Activated naive CD8-positive, alpha-beta T cell treated with anti-CD3 and anti-CD28 coated beads, Interleukin-2, amount 10 ng/mL, durations not matched to agents 7 days and 5 days (primary cell): ENCODE measurements at regions of chr15 and their contacts with region 1.

Region 1: GRCh38 chr15:43824302-43825246 is at the start of gene MFAP1:
- DNase-seq: peak; percentile 78
- ATAC-seq: peak; percentile 85
- H3K4me3 Mint-ChIP-seq: peak within 1 kb of the TSS; percentile 100
- H3K27ac Mint-ChIP-seq: peak within 1 kb of the TSS; percentile 99
- H3K4me1 Mint-ChIP-seq: peaks cover 26% of the 10 kb centered on the region
- H3K27me3 Mint-ChIP-seq: no peaks in the 10 kb centered on the region
- total RNA-seq, gene MFAP1: 33.6 to 35.3 TPM

Region 2: DNA sequence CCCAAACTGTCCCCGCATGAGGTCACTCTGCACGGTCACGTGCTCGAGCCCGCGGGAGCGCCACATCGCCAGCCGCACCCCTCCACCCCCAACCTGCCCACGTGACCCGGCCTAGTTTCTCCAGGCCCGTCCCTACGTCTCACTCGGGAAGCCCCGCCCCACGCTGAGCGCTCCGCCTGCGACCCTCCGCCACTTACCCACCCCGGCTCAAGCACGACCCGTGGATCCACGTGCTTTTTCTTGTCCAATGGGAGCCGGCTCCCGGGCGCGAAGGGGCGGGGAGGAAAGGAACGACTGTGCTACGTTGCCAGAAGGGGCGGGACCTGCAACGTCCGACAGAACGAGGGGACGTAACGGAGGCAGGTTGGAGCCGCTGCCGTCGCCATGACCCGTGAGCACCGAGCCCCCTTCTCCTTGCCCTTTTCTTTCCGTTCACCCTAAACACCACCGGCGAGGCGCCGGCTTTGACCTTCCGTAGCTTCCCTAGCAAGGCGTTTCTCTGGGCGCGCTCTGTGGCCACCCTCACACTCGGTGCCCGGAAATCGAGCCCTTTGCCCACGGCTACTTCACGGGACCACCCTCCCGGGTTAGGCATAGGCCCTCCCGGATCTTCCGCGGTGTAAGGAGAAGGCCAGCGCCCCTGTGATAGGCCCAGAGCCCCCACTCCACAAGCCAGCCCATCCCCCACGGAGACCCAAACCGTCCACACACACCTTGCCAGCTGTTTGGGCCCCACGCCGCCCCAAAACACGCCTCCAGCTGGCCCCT is 32.4 kb before region 1 on chr15 and contains the start of gene SERF2:
- POLR2A ChIA-PET with region 1: interaction called, 22 read pairs
- DNase-seq: peak; percentile 98
- ATAC-seq: peak; percentile 96
- H3K4me3 Mint-ChIP-seq: peak within 1 kb of the TSS; percentile 90
- H3K27ac Mint-ChIP-seq: peak within 1 kb of the TSS; percentile 94
- H3K4me1 Mint-ChIP-seq: peaks cover 37% of the 10 kb centered on the region
- H3K27me3 Mint-ChIP-seq: no peaks in the 10 kb centered on the region
- total RNA-seq, gene SERF2: 926 to 987 TPM

Region 3: DNA sequence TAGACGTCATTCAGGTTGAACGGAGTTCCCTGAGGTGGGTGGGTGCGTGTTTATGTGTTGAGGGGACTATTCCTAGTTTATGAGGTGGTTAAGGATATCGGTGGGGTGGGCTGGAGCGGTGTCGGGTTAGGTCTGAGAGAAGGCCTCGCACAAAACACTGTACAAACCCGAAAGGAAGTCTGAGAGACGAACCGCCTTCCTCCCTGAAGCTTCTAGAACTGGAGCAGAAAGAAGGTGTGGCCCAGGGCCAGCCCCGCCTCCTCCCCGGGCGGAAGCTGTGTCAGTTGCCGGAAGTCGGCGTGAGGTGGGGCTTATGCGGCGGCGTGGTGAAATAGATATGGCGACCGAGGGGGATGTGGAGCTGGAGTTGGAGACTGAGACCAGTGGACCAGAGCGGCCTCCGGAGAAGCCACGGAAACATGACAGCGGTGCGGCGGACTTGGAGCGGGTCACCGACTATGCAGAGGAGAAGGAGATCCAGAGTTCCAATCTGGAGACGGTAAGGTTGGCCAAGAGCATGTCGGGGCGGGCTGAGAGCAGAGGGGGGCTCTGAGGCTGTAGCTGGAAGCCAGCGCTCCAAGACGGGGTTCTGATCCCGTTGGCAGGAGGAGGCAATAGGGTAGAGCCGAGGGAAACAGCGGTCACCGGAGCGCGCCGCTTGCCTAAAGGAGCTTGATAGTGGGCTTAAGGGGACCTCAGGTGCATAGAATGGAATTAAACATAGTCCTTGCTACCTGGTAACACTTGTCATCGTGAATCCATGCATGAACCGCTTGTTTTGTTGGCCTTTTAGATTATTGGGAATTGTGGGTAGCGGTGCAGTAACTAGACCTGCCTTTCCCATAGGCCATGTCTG is 24.1 kb before region 1 on chr15 and contains the start of gene HYPK:
- POLR2A ChIA-PET with region 1: interaction called, 27 read pairs
- DNase-seq: peak; percentile 92
- ATAC-seq: peak; percentile 94
- H3K4me3 Mint-ChIP-seq: peak within 1 kb of the TSS; percentile 99
- H3K27ac Mint-ChIP-seq: peak within 1 kb of the TSS; percentile 99
- H3K4me1 Mint-ChIP-seq: peaks cover 38% of the 10 kb centered on the region
- H3K27me3 Mint-ChIP-seq: no peaks in the 10 kb centered on the region
- total RNA-seq, gene HYPK: 17.2 to 18.3 TPM